ENCODE measurements at regions of chr7 and their contacts with region 1.

Region 1: DNA sequence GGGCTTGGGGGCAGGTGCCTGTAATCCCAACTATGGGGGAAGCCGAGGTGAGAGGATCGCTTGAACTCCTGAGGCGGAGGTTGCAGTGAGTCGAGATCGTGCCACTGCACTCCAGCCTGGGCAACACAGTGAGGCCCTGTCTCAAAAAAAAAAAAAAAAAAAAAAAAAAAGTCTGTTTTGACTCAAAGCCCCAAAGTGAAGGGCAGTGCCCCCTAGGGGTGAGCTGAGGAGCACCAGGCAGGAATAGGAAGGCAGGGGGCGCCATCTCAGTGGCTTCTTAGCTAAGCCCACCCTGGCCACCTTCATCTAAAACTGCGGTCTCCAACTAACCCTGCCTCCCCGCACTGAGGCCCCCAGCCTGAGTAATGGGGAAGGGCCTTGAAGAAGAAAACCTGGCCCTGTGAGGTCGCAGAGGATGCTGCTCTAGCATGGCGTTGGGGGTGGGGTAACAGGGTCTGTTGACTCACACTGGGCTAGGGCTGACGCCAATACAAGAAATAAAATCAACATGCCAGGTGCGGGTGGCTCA is 9.8 kb downstream of the PODXL start:
- DNase-seq: peak; percentile 79
- ATAC-seq: peak; percentile 71
- H3K4me3 Mint-ChIP-seq: no peak overlapping the region
- H3K27ac Mint-ChIP-seq: no peak overlapping the region
- H3K4me1 Mint-ChIP-seq: no peaks in the 10 kb centered on the region
- H3K27me3 Mint-ChIP-seq: peaks cover 4% of the 10 kb centered on the region

Region 2: DNA sequence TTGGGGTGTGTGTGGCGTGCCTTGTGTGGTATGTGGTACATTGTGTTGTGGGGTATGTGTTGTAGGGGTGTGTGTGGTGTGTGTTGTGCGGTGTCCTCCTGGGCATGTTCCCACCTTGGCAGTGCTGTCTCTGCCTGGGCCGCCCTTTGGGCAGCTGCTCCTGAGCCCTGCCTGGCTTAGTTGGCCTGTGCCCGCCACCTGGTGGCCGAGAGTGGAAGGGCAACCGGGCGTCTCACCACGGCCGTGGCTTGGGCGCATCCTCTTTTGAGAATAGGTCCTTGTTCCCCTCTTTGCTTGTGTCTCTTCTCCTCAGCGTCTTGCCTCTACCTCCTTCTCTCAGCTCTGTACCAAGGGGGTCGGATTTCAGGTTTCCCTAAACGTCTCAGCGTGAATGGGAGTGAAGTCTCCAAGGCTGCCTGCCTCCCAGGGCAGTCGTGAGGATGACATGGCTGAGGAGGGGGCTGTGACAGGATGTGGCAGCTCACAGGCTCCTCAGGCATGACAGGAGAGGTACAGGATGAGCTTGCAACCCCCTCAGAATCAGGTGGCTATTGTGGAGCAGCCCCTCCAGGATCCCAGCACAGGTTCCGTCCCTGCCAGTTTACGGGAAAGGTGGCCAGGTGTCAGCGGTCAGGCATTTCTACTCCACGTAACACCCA is 108.2 kb after region 1 on chr7:
- CTCF ChIA-PET with region 1: interaction called, 5 read pairs
- POLR2A ChIA-PET with region 1: no interaction called
- intact Hi-C with region 1: loop called (anchors 1 to 10 kb)
- DNase-seq: peak; percentile 92
- ATAC-seq: peak; percentile 96
- H3K4me3 Mint-ChIP-seq: no peak overlapping the region
- H3K27ac Mint-ChIP-seq: no peak overlapping the region
- H3K4me1 Mint-ChIP-seq: no peaks in the 10 kb centered on the region
- H3K27me3 Mint-ChIP-seq: peaks cover 8% of the 10 kb centered on the region

Measured in activated CD4-positive, alpha-beta T cell treated with anti-CD3 and anti-CD28 coated beads for 36 hours (primary cell).